ENCODE measurements at regions of chr1 and their contacts with region 1.

Region 1: DNA sequence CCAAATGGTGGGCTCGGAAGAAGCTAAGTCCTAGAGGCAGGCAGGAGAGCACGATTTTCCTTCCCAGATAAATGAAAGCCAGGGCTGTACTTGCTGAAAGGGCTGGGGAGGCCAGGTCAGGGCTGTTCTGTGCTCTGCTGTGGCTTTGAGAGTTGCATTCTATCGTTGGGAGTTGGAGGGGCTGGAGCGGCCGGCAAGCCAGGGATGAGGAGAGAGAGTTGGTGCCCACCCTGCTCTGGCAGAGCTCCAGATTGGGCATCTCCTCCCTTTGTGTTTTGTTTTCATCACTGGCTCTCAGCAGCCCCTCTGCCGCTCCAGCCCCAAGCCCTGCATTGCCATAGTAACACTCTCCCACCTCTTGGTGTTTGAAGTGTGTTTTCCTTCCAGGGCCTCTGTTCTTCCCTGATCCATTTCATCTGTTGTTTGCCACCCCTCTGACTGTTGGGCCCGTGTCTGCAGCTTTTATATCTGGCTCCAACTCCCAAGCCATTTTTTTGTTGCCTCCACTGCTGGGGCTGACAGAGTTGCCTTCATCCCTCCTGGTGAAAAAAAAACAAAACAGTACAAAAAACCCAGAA is 152.7 kb downstream of the URB2 start:
- DNase-seq: no peak
- ATAC-seq: no peak
- H3K4me3 ChIP-seq: no peak overlapping the region
- H3K27ac ChIP-seq: no peak overlapping the region
- H3K4me1 ChIP-seq: peaks cover 0 to 6% (median 0%) of the 10 kb centered on the region in 12 donors
- H3K27me3 ChIP-seq: peaks cover 0 to 3% (median 0%) of the 10 kb centered on the region in 9 donors
- CTCF ChIP-seq: no peak
- POLR2A ChIP-seq: no peak

Region 2: GRCh38 chr1:229822026-229822425 is 43.3 kb after region 1 on chr1:
- intact Hi-C with region 1: loop called in 1 of 10 experiments (anchors 10 kb)
- DNase-seq: no peak
- ATAC-seq: no peak
- H3K4me3 ChIP-seq: no peak overlapping the region
- H3K27ac ChIP-seq: no peak overlapping the region
- H3K4me1 ChIP-seq: peaks cover 0 to 2% (median 0%) of the 10 kb centered on the region in 12 donors
- H3K27me3 ChIP-seq: no peaks in the 10 kb centered on the region
- CTCF ChIP-seq: no peak
- POLR2A ChIP-seq: no peak